Mammary epithelial cell (primary cell): ENCODE measurements at regions of chr7 and their contacts with region 1.

Region 1: GRCh38 chr7:22732556-22733126 is 5.6 kb downstream of the IL6 start:
- DNase-seq: peak; percentile 60
- H3K4me3 ChIP-seq: no peak overlapping the region
- H3K27ac ChIP-seq: no peak overlapping the region
- H3K4me1 ChIP-seq: peaks cover 22% of the 10 kb centered on the region
- H3K27me3 ChIP-seq: no peaks in the 10 kb centered on the region
- CTCF ChIP-seq: peak; percentile 76 to 85

Region 2: GRCh38 chr7:22782616-22783232 is 50.1 kb after region 1 on chr7:
- CTCF ChIA-PET with region 1: no interaction called
- dilution Hi-C with region 1: no loop called
- in situ Hi-C with region 1: no loop called
- intact Hi-C with region 1: loop called (anchors 1 kb)
- DNase-seq: peak; percentile 41
- H3K4me3 ChIP-seq: no peak overlapping the region
- H3K27ac ChIP-seq: no peak overlapping the region
- H3K4me1 ChIP-seq: peaks cover 8% of the 10 kb centered on the region
- H3K27me3 ChIP-seq: no peaks in the 10 kb centered on the region
- CTCF ChIP-seq: peak; percentile 88 to 90

Region 3: GRCh38 chr7:22814261-22815208 is 81.9 kb after region 1 on chr7:
- CTCF ChIA-PET with region 1: no interaction called
- dilution Hi-C with region 1: loop called (anchors 5 kb)
- in situ Hi-C with region 1: no loop called
- intact Hi-C with region 1: no loop called
- DNase-seq: peak; percentile 50
- H3K4me3 ChIP-seq: no peak overlapping the region
- H3K27ac ChIP-seq: no peak overlapping the region
- H3K4me1 ChIP-seq: peaks cover 11% of the 10 kb centered on the region
- H3K27me3 ChIP-seq: no peaks in the 10 kb centered on the region
- CTCF ChIP-seq: no peak

Region 4: GRCh38 chr7:22860784-22861482 is 128.3 kb after region 1 on chr7:
- CTCF ChIA-PET with region 1: interaction called, 4 read pairs
- dilution Hi-C with region 1: no loop called
- in situ Hi-C with region 1: no loop called
- intact Hi-C with region 1: loop called (anchors 5 kb)
- DNase-seq: peak; percentile 22
- H3K4me3 ChIP-seq: no peak overlapping the region
- H3K27ac ChIP-seq: peak overlapping the region; percentile 99
- H3K4me1 ChIP-seq: peaks cover 53% of the 10 kb centered on the region
- H3K27me3 ChIP-seq: no peaks in the 10 kb centered on the region
- CTCF ChIP-seq: peak; percentile 51 to 62

Region 5: GRCh38 chr7:23055582-23056178 is 323.0 kb after region 1 on chr7:
- CTCF ChIA-PET with region 1: no interaction called
- dilution Hi-C with region 1: no loop called
- in situ Hi-C with region 1: loop called in 1 of 2 experiments (anchors 10 kb)
- intact Hi-C with region 1: loop called (anchors 1 kb)
- DNase-seq: peak; percentile 57
- H3K4me3 ChIP-seq: no peak overlapping the region
- H3K27ac ChIP-seq: no peak overlapping the region
- H3K4me1 ChIP-seq: peaks cover 2% of the 10 kb centered on the region
- H3K27me3 ChIP-seq: no peaks in the 10 kb centered on the region
- CTCF ChIP-seq: peak; percentile 94 to 95